AG04449 (cell line): ENCODE measurements at regions of chr14 and their contacts with region 1.

Region 1: DNA sequence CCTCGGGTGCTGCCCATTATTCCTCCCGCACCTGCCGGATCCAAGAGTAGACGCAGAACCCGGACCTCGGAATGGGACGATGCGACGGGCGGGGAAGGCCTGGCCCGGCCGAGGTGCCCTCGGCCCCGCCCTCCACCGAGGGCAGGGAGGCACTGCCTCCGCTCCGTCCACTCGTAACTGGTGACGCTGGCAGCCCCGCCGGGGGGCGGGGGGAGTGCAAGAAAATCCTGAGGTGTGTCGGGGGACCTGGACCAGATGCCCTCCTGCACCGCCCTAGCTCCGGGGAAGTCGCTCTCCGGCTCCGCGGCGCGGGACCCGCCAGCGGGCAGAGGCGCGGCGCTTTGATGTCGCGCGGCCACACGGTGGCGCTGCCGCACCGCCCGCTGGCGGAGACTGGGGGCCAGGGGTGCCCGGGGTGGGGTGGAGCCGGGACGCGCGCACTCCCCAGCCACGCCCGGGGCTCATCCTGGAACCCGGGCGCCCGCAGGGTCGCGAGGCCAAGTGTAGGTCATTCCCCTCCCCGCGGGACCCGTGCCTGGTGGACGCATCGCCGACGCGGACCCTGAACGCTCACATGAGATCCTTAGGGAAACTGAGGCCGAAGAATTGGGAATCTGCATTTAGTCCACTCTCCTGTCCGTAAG is 202.8 kb downstream of the TTC8 start:
- DNase-seq: no peak
- H3K4me3 ChIP-seq: peak overlapping the region; percentile 69
- CTCF ChIP-seq: peak; percentile 71

Region 2: GRCh38 chr14:89013084-89013504 is 14.1 kb before region 1 on chr14:
- CTCF ChIA-PET with region 1: interaction called, 12 read pairs
- POLR2A ChIA-PET with region 1: no interaction called
- DNase-seq: no peak
- H3K4me3 ChIP-seq: no peak overlapping the region
- CTCF ChIP-seq: peak; percentile 25

Region 3: GRCh38 chr14:89936658-89937185 is 909.5 kb after region 1 on chr14:
- CTCF ChIA-PET with region 1: interaction called, 47 read pairs
- POLR2A ChIA-PET with region 1: no interaction called
- DNase-seq: no peak
- H3K4me3 ChIP-seq: no peak overlapping the region
- CTCF ChIP-seq: no peak